Thyroid gland (tissue), 4 donors: ENCODE measurements at regions of chr4 and their contacts with region 1.

Region 1: DNA sequence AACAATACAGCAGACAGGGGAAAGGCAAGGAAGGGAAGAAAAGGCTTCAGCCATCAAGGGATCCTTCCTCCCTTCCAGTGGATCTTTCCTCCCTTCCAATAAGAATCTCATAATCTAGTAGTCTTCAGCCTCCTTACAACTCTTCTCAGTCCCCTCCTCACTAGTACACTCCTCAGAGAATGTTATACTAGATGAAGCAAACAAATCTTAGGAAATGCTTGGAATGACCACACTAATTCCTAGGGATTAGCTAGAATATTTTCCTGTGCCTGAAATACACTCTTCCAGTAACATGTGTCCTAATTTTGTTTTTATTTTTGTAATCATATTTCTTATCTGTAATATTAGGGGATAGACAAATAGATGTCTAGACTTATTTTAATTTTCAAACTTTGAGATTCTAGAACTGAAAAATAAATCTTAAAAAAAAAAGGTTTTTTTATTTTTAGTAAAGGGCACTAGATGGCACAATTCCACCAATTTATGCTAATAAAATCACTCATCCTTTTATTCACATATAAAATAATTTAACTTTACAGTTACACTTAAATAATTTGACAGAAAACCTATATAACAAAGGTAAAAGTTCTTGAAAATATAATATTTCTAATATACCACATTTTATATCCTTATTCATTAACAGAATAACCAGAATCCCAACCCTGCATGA is 7.0 kb upstream of the STPG2 start:
- DNase-seq: no peak
- H3K4me3 ChIP-seq: no peak overlapping the region
- H3K27ac ChIP-seq: no peak overlapping the region
- H3K4me1 ChIP-seq: no peaks in the 10 kb centered on the region
- H3K27me3 ChIP-seq: no peaks in the 10 kb centered on the region
- CTCF ChIP-seq: peak in 3 of 6 experiments; percentile 12 to 42 (median 32)
- POLR2A ChIP-seq: no peak

Region 2: DNA sequence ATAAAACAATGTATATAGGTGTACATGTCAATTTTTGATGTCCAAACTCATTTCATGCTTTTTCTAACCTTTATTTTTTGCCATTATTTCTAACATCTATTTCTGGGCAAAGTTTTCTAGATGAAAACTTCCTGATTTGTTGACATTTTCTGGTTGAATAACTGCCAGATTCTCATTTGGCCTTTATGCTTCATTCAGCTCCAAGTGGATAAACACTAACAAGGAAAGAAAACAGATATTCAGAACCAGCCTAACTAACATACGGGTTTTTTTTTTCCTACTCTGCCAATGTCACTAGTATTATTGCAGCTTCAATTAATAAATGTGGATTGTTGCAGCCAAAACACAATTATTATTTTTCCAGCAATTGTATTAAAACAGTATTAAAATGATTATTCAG is 60.1 kb after region 1 on chr4:
- intact Hi-C with region 1: no loop called
- DNase-seq: no peak
- H3K4me3 ChIP-seq: no peak overlapping the region
- H3K27ac ChIP-seq: peak overlapping the region in 2 of 3 donors; percentile 6 to 31
- H3K4me1 ChIP-seq: peaks cover 0 to 6% of the 10 kb centered on the region in 2 donors
- H3K27me3 ChIP-seq: no peaks in the 10 kb centered on the region
- CTCF ChIP-seq: no peak
- POLR2A ChIP-seq: no peak

Region 3: GRCh38 chr4:98222306-98222705 is 72.1 kb after region 1 on chr4:
- intact Hi-C with region 1: no loop called
- DNase-seq: no peak
- H3K4me3 ChIP-seq: no peak overlapping the region
- H3K27ac ChIP-seq: no peak overlapping the region
- H3K4me1 ChIP-seq: no peaks in the 10 kb centered on the region
- H3K27me3 ChIP-seq: no peaks in the 10 kb centered on the region
- CTCF ChIP-seq: no peak
- POLR2A ChIP-seq: no peak

Region 4: DNA sequence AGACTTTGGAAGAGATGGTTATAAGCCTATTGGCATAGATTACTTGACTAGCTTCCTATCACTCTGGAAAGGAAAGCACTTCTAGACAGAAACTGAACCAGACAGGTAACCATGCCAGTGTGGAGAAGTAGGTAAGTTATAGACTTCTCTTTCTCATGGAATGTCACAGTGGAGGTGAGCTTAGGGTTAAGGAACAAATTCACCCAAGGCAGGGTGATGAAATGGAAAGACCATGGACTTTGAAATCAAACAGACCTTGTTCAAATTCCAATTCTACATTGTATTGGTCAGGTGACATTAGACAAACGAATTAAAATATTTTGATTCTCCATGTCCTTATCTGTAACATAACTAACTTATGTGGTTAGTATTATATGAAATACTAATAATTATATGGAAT is 103.3 kb after region 1 on chr4:
- intact Hi-C with region 1: loop called (anchors 10 kb)
- DNase-seq: no peak
- H3K4me3 ChIP-seq: no peak overlapping the region
- H3K27ac ChIP-seq: no peak overlapping the region
- H3K4me1 ChIP-seq: no peaks in the 10 kb centered on the region
- H3K27me3 ChIP-seq: no peaks in the 10 kb centered on the region
- CTCF ChIP-seq: no peak
- POLR2A ChIP-seq: no peak